ENCODE measurements at regions of chr2 and their contacts with region 1.

Region 1: DNA sequence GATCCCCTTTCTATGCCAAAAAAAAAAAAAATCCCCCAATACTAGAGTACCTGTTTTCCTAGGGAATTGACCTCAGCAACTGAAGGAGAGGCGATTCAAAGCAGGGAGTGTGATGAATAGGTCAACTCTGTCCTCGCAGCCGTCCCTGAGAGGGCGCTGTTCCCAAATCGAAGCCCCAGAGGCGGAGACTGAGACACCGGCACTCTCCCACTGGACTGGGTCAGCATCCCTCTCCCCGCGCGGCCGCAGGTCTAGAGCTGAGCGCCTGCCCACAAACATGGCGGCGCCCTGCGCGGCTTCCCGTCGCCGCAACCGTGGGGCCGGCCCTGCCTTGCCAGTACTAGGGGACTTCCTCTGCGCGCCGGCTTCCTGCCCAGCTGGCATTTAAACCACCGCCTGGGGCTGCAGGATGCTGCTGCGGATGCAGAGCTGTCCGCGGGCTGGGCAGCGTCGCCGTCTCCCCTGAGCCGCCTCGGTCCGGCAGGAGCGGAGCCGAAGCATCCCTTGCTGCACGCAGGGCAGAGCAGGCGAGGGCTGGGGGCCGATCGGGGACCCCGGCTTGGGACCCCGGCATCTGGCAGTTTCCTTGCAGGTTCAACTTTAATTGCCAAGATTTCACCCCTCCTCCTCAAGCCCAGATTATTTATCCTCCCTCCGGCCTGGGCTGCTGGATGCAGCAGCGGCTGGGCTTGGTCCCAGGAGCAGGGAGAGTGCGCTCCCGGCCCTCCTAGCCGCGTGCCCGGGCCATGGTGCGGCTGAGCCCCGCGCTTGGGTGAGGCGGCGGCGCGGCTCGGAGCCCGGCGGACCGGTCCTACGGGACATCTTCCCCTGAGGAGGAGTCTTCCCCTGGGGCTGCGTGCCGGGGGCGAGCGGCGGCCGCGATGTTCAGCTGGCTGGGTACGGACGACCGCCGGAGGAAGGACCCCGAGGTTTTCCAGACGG is at the start of gene EHD3:
- DNase-seq: peak; percentile 82
- H3K4me3 ChIP-seq: peak within 1 kb of the TSS; percentile 3 to 62 (median 40)
- H3K27ac ChIP-seq: no peak within 1 kb of the TSS
- H3K4me1 ChIP-seq: peaks cover 4% of the 10 kb centered on the region
- H3K27me3 ChIP-seq: peaks cover 6 to 12% of the 10 kb centered on the region in 2 experiments
- CTCF ChIP-seq: peak; percentile 43 to 63
- POLR2A ChIP-seq: peak; percentile 28
- total RNA-seq, gene EHD3: 10.7 and 12.1 TPM in 2 replicates

Region 2: GRCh38 chr2:31269117-31269516 is 35.1 kb after region 1 on chr2:
- CTCF ChIA-PET with region 1: no interaction called
- POLR2A ChIA-PET with region 1: no interaction called
- dilution Hi-C with region 1: no loop called
- intact Hi-C with region 1: loop called (anchors 5 kb)
- DNase-seq: no peak
- H3K4me3 ChIP-seq: no peak overlapping the region
- H3K27ac ChIP-seq: no peak overlapping the region
- H3K4me1 ChIP-seq: no peaks in the 10 kb centered on the region
- H3K27me3 ChIP-seq: peaks cover 0 to under 1% of the 10 kb centered on the region in 2 experiments
- CTCF ChIP-seq: no peak
- POLR2A ChIP-seq: no peak

Region 3: DNA sequence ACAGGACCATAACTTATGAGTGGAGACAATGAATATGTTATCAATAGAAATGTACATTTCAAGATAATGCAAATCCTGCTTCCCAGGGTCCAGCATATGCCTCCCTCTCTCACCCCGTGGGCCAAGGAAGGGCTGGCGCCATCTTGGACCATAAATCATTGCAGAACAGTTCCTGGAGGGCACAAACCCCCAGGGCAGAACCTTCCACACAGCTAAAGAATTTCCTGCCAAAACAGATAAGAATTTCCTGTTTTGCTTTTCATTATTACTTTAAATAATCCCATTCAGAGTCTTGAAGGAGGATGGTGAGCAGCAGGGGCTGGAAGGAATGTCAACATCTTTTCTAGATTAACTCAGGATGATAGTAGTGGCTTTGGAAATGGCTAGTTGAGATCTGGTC is 53.6 kb after region 1 on chr2:
- CTCF ChIA-PET with region 1: interaction called, 3 read pairs
- POLR2A ChIA-PET with region 1: no interaction called
- dilution Hi-C with region 1: no loop called
- intact Hi-C with region 1: loop called (anchors 2 kb)
- DNase-seq: peak; percentile 68
- H3K4me3 ChIP-seq: no peak overlapping the region
- H3K27ac ChIP-seq: peak overlapping the region; percentile 36
- H3K4me1 ChIP-seq: peaks cover 29% of the 10 kb centered on the region
- H3K27me3 ChIP-seq: no peaks in the 10 kb centered on the region
- CTCF ChIP-seq: no peak
- POLR2A ChIP-seq: no peak

Region 4: GRCh38 chr2:31297751-31298150 is 63.7 kb after region 1 on chr2:
- CTCF ChIA-PET with region 1: no interaction called
- POLR2A ChIA-PET with region 1: no interaction called
- dilution Hi-C with region 1: no loop called
- intact Hi-C with region 1: loop called (anchors 2 kb)
- DNase-seq: no peak
- H3K4me3 ChIP-seq: no peak overlapping the region
- H3K27ac ChIP-seq: no peak overlapping the region
- H3K4me1 ChIP-seq: peaks cover 16% of the 10 kb centered on the region
- H3K27me3 ChIP-seq: peaks cover 0 to 2% of the 10 kb centered on the region in 2 experiments
- CTCF ChIP-seq: no peak
- POLR2A ChIP-seq: no peak

Region 5: DNA sequence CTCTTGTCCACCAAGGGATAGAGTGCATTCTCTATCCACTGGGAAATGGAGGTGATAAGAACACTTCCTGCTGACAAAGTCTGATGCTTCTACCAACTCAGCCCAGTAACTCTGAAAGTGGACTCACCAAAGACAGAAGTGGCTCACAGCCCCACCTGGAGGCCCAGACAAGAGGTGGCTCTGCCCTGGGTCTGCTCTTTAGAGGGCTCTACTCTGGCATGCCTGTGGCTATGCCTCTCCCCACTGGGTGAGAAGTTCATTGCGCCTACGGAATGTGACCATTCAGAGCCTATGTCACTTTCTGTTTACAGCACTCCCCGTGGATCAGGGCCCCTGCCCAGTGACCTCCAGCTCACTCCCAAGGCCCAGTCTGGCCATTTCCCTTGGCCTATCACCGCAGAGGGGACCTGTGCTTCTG is 194.0 kb after region 1 on chr2:
- CTCF ChIA-PET with region 1: no interaction called
- POLR2A ChIA-PET with region 1: no interaction called
- dilution Hi-C with region 1: no loop called
- intact Hi-C with region 1: no loop called
- DNase-seq: no peak
- H3K4me3 ChIP-seq: no peak overlapping the region
- H3K27ac ChIP-seq: no peak overlapping the region
- H3K4me1 ChIP-seq: no peaks in the 10 kb centered on the region
- H3K27me3 ChIP-seq: no peaks in the 10 kb centered on the region
- CTCF ChIP-seq: no peak
- POLR2A ChIP-seq: no peak